CD8-positive, alpha-beta T cell (primary cell): ENCODE measurements at regions of chr6 and their contacts with region 1.

Region 1: DNA sequence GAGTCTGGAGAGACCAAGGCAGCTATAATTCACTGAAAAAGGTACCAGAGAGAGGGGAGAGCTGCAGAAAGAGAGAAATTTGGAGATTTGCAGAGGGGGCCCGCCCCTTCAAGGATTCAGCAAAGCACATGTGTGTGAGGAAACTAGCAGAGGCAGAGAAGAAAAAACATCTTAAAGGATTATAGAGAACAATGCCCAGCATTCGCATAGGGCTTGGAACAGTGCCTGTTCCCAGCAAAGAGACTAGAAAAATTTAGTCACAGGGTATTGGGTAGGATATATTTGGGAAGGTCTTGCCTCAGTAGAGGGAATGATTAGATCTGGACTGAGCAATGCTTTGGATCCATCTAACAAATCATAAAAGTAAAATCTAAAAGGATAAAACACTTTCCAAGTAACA is 44.0 kb downstream of the SRPK1 start:
- DNase-seq: no peak
- ATAC-seq: no peak
- H3K4me3 ChIP-seq: no peak overlapping the region
- H3K4me3 Mint-ChIP-seq: no peak overlapping the region
- H3K27ac ChIP-seq: no peak overlapping the region
- H3K27ac Mint-ChIP-seq: no peak overlapping the region
- H3K4me1 ChIP-seq: no peaks in the 10 kb centered on the region
- H3K4me1 Mint-ChIP-seq: no peaks in the 10 kb centered on the region
- H3K27me3 ChIP-seq: no peaks in the 10 kb centered on the region
- H3K27me3 Mint-ChIP-seq: no peaks in the 10 kb centered on the region
- CTCF ChIP-seq: no peak

Region 2: GRCh38 chr6:36360241-36361054 is 483.5 kb after region 1 on chr6:
- CTCF ChIA-PET with region 1: no interaction called
- POLR2A ChIA-PET with region 1: no interaction called
- intact Hi-C with region 1: loop called in 1 of 2 experiments (anchors 10 kb)
- DNase-seq: peak; percentile 38 to 81 (median 69)
- ATAC-seq: peak; percentile 93
- H3K4me3 ChIP-seq: no peak overlapping the region
- H3K4me3 Mint-ChIP-seq: no peak overlapping the region
- H3K27ac ChIP-seq: no peak overlapping the region
- H3K27ac Mint-ChIP-seq: no peak overlapping the region
- H3K4me1 ChIP-seq: peaks cover 4% of the 10 kb centered on the region
- H3K4me1 Mint-ChIP-seq: peaks cover 11% of the 10 kb centered on the region
- H3K27me3 ChIP-seq: no peaks in the 10 kb centered on the region
- H3K27me3 Mint-ChIP-seq: peaks cover 3% of the 10 kb centered on the region
- CTCF ChIP-seq: peak; percentile 74